ENCODE measurements at regions of chr16 and their contacts with region 1.

Region 1: DNA sequence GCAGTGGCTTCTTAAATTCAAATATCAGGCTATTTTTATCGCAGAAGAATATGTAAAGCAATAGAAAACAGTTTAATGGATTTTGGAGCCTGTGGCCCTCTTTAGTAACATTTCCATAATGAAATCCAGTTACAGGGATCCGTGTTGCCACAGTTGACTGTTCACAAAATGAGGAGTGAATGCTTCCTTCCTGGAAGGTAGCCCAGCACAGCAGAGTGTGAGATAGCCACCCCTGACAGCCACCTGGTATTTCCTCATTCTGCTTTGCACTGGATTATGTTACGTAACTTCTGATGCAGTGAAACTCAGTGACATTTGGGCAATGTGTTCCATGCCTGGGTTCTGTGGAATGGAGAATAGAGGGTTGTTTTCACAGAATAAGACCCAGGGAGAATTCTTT is 517.2 kb downstream of the RBFOX1 start:
- DNase-seq: no peak
- ATAC-seq: no peak
- H3K4me3 ChIP-seq: no peak overlapping the region
- H3K27ac ChIP-seq: no peak overlapping the region
- H3K4me1 ChIP-seq: no peaks in the 10 kb centered on the region
- H3K27me3 ChIP-seq: no peaks in the 10 kb centered on the region
- CTCF ChIP-seq: no peak

Region 2: DNA sequence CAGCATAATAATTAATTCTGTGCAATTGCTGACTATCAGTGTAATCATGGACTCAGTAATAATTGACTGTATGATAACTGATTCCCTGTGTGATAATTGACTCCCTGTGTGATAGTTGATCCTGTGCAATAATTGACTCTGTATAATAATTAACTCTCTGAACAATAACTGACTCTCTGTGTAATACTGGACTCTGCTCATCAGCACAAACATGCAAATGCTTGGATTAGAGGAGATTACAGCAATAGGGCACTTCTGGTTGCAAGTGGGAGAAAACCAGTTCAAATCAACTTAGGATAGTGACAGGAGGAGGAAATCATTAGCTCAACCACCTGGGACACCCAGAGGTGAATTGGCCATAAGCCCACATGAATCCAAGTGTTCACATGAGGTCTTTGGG is 64.9 kb after region 1 on chr16:
- intact Hi-C with region 1: loop called in 1 of 2 experiments (anchors 10 kb)
- DNase-seq: no peak
- ATAC-seq: no peak
- H3K4me3 ChIP-seq: no peak overlapping the region
- H3K27ac ChIP-seq: no peak overlapping the region
- H3K4me1 ChIP-seq: no peaks in the 10 kb centered on the region
- H3K27me3 ChIP-seq: no peaks in the 10 kb centered on the region
- CTCF ChIP-seq: no peak

Measured in left lung (tissue), 14 donors.